Heart right ventricle (tissue), 16 donors: ENCODE measurements at regions of chr9 and their contacts with region 1.

Region 1: DNA sequence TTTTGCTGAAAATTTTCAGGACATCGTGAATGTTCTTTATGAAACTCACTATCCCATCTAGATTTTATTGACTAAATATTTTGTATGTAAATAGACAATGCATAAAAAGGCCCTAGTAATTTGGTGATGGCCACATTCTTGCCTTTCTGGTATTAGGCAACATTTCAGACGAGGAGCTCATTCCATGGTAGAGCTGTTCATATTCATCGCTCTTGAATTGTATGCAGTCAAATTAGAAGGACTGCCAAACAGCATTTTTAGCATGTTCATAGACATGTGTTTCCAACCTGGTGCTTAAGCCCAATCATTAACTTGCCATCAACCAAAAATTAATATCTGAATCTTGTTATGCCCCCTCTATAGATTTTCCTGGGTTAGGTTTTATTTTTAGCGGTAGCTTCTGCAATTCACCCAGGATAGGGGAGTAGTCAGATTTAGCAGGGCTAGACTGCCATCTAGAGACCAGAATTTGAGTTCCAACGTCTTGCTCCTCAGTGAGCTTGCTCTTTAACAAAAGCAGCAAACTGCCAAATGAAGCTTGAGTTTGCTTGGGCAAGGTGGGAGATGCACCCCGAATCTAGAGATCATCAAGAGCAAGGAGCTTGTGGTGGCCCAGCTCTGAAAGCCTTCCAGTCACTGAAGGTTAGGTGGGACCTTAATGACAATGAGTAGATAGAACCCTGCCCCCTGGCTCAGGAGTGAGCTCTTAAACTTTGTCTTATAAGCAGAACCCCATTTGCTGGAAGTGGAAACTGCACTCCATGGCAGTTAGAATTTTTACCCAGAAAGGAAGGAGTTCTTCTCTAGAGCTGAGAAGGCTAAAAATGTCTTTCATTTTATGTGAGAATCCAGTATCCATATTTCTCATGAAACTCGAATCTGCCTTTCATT is 456.2 kb downstream of the RASEF start:
- DNase-seq: peak in 1 of 2 donors; percentile 57
- ATAC-seq: peak in 7 of 8 donors; percentile 78 to 89 (median 83)
- H3K4me3 ChIP-seq: no peak overlapping the region
- H3K27ac ChIP-seq: no peak overlapping the region
- H3K4me1 ChIP-seq: peaks cover 0 to 26% (median 9%) of the 10 kb centered on the region in 9 donors
- H3K27me3 ChIP-seq: peaks cover 0 to 27% (median 5%) of the 10 kb centered on the region in 7 donors
- CTCF ChIP-seq: peak; percentile 32 to 80 (median 70)

Region 2: GRCh38 chr9:81529556-81530195 is 1077.1 kb before region 1 on chr9:
- intact Hi-C with region 1: loop called in 7 of 10 experiments (anchors 5 to 10 kb)
- DNase-seq: peak in 1 of 2 donors; percentile 12
- ATAC-seq: peak in 6 of 8 donors; percentile 69 to 82 (median 78)
- H3K4me3 ChIP-seq: no peak overlapping the region
- H3K27ac ChIP-seq: peak overlapping the region in 2 of 10 donors; percentile 6 to 46
- H3K4me1 ChIP-seq: peaks cover 0 to 22% (median 0%) of the 10 kb centered on the region in 9 donors
- H3K27me3 ChIP-seq: no peaks in the 10 kb centered on the region
- CTCF ChIP-seq: no peak

Region 3: DNA sequence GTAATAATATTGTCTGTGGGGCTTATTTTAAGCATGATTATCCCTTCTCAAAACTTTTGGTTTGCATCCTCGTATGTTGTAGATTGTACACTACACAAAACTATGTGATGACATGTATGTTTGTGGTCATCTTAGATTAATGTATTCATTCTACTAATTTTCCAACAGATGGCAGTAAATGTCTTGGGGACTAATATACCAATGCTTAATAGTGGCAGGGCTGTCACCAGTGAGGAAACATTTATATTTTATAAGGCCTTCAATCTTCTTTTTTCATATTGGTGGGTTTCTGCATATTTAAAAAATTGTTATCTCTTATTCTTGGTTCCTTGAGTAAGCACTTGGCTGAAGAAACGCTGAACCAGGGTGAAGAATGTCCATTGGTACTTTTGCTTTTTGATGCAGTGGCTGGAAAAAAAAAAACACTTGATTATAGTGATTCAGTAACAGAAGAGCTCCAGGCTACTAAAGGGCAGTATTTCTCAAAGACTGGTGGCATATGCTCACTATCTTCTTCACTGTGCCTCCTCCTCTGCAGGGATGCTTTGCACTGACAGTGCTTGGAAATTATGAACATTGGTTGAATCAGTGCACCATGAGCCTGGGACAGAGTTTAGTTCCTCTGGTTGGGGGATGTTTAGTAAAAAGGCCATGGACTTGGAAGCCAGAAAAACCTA is 74.1 kb before region 1 on chr9:
- intact Hi-C with region 1: loop called in 8 of 10 experiments (anchors 1 to 10 kb)
- DNase-seq: no peak
- ATAC-seq: peak in 2 of 8 donors; percentile 66 to 69
- H3K4me3 ChIP-seq: no peak overlapping the region
- H3K27ac ChIP-seq: no peak overlapping the region
- H3K4me1 ChIP-seq: peaks cover 0 to 9% (median 0%) of the 10 kb centered on the region in 9 donors
- H3K27me3 ChIP-seq: no peaks in the 10 kb centered on the region
- CTCF ChIP-seq: peak in 8 of 9 donors; percentile 36 to 69 (median 49)

Region 4: DNA sequence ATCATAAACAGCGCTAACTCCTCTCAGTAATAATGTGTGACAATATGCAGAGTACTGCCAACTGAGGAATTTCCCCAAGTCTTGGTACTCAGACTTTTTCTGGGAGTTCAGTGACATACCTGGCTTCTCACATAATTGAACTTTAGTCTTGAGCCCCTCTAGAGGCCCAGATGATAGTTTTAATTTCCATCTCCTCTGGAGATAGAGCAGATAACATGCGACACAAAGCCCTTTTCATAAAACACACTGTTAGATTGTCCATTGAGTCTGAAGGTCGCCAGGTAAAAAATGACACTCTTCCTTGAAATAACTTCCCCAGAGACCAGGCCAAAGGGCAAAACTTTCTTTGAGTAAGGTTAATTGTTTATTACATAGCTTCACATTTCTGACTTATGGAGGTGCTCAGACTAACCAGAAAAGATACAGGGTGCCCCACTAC is 19.8 kb before region 1 on chr9:
- intact Hi-C with region 1: loop called in 1 of 10 experiments (anchors 1 kb)
- DNase-seq: no peak
- ATAC-seq: no peak
- H3K4me3 ChIP-seq: no peak overlapping the region
- H3K27ac ChIP-seq: no peak overlapping the region
- H3K4me1 ChIP-seq: no peaks in the 10 kb centered on the region
- H3K27me3 ChIP-seq: no peaks in the 10 kb centered on the region
- CTCF ChIP-seq: no peak